GM13977 (cell line): ENCODE measurements at regions of chr16 and their contacts with region 1.

Region 1: GRCh38 chr16:77376358-77376757 is 58.5 kb downstream of the ADAMTS18 start:
- DNase-seq: peak; percentile 27
- CTCF ChIP-seq: peak; percentile 47

Region 2: DNA sequence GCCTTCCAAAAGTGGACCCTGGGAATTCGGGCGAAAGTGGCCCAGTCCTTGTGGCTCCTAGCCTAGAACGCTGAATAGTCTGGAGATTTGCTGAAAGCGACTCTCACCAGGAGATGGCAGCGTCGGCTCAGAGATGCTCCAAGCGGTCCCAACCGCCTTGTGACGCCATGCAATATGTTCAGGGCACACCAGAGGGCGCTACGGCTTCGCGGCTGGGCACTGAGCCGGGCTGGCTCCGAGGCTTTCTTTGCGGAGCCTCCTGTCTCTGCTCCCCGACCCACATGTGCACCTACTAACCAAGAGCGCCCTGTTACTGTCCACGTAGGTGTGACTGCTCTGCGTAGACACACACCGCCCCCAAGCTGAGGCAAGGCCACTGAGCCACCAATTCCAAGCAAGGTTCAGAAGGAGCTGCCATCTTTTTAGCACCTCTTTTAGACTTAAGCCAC is 140.3 kb before region 1 on chr16:
- in situ Hi-C with region 1: loop called (anchors 10 kb)
- DNase-seq: peak; percentile 80
- CTCF ChIP-seq: peak; percentile 100